CD4-positive, alpha-beta memory T cell (primary cell): ENCODE measurements at regions of chr2 and their contacts with region 1.

Region 1: DNA sequence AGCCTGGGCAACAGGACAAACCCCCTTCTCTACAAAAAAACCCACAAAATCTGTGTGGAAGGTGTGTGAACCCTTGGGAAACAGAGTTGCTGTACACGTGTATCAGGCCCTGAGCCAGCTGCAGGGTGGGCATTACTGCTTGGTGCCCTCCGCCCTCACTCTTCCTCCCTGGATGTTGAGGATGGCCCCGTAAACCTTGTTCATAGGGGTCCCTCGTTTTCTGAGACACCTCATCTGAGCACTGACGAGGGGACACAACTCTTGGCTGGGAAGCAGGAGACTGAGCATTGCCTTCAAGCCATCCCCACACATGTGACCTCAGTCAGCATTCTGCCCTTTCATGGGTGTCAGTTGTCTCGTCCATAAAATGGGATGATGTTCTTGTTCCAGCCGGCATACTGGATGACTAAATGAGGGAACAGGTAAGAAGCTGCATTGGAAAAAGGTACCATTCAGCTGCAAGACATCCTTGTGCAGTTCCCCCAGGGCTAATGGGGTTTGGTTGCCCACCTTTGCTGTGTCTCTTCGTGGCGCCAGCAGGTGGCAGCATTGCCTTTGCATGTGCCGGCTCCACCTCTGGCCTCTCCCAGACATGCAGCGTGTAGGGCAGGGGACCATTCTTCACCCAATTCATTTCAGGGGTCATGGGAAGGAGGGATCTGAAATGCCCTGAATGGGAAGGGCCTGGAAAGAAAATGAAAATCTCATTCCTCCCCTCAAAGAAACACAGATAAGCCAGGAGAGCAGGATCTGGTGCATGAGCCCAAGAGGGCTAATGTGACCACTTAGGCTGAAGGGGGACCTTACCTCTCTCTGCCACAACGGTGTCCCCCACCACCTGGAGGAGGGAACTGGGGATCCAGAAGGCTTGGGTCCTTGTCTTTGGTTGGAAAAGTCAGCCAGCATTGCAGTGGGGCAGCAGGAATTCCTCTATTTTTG is 36.4 kb upstream of the HAAO start:
- DNase-seq: peak; percentile 59 to 68 (median 63)
- H3K4me3 ChIP-seq: no peak overlapping the region
- H3K4me3 Mint-ChIP-seq: peak overlapping the region in 5 of 8 donors; percentile 17 to 57 (median 31)
- H3K27ac ChIP-seq: no peak overlapping the region
- H3K27ac Mint-ChIP-seq: peak overlapping the region in 1 of 7 donors; percentile 58
- H3K4me1 ChIP-seq: peaks cover 13% of the 10 kb centered on the region
- H3K4me1 Mint-ChIP-seq: peaks cover 8 to 20% (median 17%) of the 10 kb centered on the region in 4 donors
- H3K27me3 ChIP-seq: no peaks in the 10 kb centered on the region
- H3K27me3 Mint-ChIP-seq: peaks cover 3 to 10% of the 10 kb centered on the region in 2 donors

Region 2: DNA sequence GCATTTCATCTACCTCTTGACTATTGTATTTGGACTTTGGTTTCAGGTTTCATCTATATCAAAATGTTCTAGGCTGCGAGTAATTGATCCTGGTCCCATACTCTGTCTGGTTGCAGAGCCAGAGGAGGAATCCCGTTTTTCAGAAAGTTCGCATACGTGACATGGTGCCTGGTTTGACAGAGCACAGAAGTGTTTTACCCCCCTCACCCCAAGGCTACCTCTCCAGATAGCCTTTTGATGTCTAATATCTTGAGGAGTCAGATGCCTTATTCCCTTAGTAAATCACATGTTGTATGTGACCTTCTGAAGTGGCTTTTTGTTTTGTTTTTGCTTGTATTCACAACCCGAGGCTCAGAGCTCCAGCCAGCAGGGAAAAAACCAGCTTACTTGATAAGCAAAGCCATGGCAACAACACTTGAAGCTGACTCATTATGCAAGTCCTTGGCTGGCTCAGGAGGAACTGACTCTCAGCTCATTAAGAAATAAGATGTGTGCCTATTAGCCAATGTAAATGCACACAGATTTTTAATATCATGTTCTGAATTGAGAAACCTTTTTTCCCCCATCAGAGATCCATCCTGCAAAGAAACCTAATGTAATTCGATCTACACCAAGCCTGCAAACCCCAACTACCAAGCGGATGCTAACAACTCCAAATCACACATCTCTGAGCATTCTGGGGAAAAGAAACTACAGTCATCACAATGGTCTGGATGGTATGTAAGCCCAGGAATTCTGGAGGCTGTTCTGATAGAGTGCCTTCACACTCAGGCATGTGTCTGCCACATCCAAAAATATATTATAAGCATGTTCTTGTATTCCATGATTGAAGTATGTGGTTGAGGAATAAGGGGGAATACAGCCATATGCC is 106.2 kb before region 1 on chr2:
- CTCF ChIA-PET with region 1: no interaction called
- POLR2A ChIA-PET with region 1: no interaction called
- intact Hi-C with region 1: no loop called
- DNase-seq: no peak
- H3K4me3 ChIP-seq: no peak overlapping the region
- H3K4me3 Mint-ChIP-seq: no peak overlapping the region
- H3K27ac ChIP-seq: no peak overlapping the region
- H3K27ac Mint-ChIP-seq: no peak overlapping the region
- H3K4me1 ChIP-seq: no peaks in the 10 kb centered on the region
- H3K4me1 Mint-ChIP-seq: no peaks in the 10 kb centered on the region
- H3K27me3 ChIP-seq: no peaks in the 10 kb centered on the region
- H3K27me3 Mint-ChIP-seq: no peaks in the 10 kb centered on the region

Region 3: DNA sequence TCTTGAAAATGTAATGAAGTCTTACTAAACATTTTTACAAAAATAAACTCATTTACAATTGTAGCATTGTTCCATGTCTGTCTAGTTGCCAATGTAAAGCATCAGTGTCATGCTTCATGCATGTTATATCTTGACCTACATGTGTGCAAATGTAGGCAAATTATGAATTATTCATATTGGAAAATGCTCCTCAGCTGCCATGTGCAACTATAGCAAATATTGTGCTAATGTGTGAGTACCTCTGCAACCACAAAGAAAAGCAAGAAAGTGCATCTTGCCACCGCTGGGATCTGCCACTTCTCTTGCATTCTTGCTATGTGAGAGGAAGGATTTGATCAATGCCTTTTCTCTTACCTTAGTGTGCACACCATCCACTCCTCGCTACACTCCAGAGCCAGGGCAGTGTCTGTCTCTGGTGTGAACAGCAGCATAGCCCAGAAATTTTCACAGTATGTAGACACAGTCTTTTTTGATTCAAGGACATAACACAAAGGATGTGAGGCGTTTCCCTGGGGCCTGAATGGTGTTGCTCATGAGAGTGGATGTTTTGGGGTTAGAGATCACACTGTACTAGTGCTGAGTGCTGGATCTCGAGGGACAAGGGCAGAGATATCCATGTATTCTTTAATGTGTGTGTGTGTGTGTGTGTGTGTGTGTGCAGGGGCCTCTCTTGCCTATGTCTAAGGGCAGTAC is 11.2 kb after region 1 on chr2:
- CTCF ChIA-PET with region 1: interaction called, 17 read pairs
- POLR2A ChIA-PET with region 1: no interaction called
- intact Hi-C with region 1: no loop called
- DNase-seq: no peak
- H3K4me3 ChIP-seq: no peak overlapping the region
- H3K4me3 Mint-ChIP-seq: no peak overlapping the region
- H3K27ac ChIP-seq: no peak overlapping the region
- H3K27ac Mint-ChIP-seq: no peak overlapping the region
- H3K4me1 ChIP-seq: no peaks in the 10 kb centered on the region
- H3K4me1 Mint-ChIP-seq: no peaks in the 10 kb centered on the region
- H3K27me3 ChIP-seq: no peaks in the 10 kb centered on the region
- H3K27me3 Mint-ChIP-seq: no peaks in the 10 kb centered on the region